Calu3 (cell line): ENCODE measurements at regions of chr3 and their contacts with region 1.

Region 1: GRCh38 chr3:30751610-30752299 is 142.7 kb downstream of the GADL1 start:
- DNase-seq: peak; percentile 27
- H3K4me3 Mint-ChIP-seq: no peak overlapping the region
- H3K27ac Mint-ChIP-seq: no peak overlapping the region
- H3K4me1 Mint-ChIP-seq: peaks cover 38% of the 10 kb centered on the region
- H3K27me3 Mint-ChIP-seq: no peaks in the 10 kb centered on the region
- CTCF ChIP-seq: no peak

Region 2: DNA sequence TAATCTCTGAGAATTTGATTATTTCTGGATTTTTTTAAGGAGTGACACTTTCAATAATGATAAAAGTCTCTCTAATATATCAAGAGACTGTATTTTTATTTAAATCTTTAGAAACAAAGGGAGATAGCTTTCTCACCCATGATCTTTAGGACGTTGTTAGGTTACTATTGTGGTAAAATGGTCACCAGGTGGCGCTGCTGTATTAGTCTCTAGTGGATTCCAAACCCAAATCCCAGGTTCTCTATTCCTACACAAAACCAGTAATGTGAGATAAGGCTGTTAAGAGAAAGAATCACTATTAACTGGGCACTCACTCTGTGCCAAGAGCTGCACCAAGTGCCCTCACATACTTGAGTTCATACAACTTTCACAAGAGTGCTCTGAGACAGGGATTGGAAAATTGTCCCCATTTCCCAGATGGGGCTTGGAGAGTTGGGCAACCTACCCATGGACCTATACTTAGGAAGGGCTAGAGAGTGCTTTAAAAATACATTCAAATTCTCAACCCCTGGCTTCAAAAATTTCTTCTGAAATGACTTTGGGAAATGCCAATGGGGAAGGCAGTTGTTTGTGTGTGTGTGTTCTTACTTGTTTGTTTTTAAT is 738.7 kb before region 1 on chr3:
- CTCF ChIA-PET with region 1: interaction called, 3 read pairs
- intact Hi-C with region 1: loop called (anchors 2 kb)
- DNase-seq: peak; percentile 72
- H3K4me3 Mint-ChIP-seq: no peak overlapping the region
- H3K27ac Mint-ChIP-seq: no peak overlapping the region
- H3K4me1 Mint-ChIP-seq: peaks cover 22% of the 10 kb centered on the region
- H3K27me3 Mint-ChIP-seq: no peaks in the 10 kb centered on the region
- CTCF ChIP-seq: no peak

Region 3: GRCh38 chr3:30042274-30042859 is 709.4 kb before region 1 on chr3:
- CTCF ChIA-PET with region 1: no interaction called
- intact Hi-C with region 1: loop called (anchors 1 kb)
- DNase-seq: peak; percentile 71
- H3K4me3 Mint-ChIP-seq: no peak overlapping the region
- H3K27ac Mint-ChIP-seq: no peak overlapping the region
- H3K4me1 Mint-ChIP-seq: no peaks in the 10 kb centered on the region
- H3K27me3 Mint-ChIP-seq: no peaks in the 10 kb centered on the region
- CTCF ChIP-seq: peak; percentile 23

Region 4: GRCh38 chr3:30199096-30199759 is 552.5 kb before region 1 on chr3:
- CTCF ChIA-PET with region 1: interaction called, 4 read pairs
- intact Hi-C with region 1: loop called (anchors 5 kb)
- DNase-seq: peak; percentile 58
- H3K4me3 Mint-ChIP-seq: no peak overlapping the region
- H3K27ac Mint-ChIP-seq: no peak overlapping the region
- H3K4me1 Mint-ChIP-seq: no peaks in the 10 kb centered on the region
- H3K27me3 Mint-ChIP-seq: no peaks in the 10 kb centered on the region
- CTCF ChIP-seq: peak; percentile 68

Region 5: DNA sequence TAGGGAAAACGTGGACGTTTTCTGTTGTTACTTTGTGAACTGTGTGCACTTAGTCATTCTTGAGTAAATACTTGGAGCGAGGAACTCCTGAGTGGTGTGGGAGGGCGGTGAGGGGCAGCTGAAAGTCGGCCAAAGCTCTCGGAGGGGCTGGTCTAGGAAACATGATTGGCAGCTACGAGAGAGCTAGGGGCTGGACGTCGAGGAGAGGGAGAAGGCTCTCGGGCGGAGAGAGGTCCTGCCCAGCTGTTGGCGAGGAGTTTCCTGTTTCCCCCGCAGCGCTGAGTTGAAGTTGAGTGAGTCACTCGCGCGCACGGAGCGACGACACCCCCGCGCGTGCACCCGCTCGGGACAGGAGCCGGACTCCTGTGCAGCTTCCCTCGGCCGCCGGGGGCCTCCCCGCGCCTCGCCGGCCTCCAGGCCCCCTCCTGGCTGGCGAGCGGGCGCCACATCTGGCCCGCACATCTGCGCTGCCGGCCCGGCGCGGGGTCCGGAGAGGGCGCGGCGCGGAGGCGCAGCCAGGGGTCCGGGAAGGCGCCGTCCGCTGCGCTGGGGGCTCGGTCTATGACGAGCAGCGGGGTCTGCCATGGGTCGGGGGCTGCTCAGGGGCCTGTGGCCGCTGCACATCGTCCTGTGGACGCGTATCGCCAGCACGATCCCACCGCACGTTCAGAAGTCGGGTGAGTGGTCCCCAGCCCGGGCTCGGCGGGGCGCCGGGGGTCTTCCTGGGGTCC is 145.3 kb before region 1 on chr3 and contains the start of gene TGFBR2:
- CTCF ChIA-PET with region 1: no interaction called
- intact Hi-C with region 1: loop called (anchors 5 kb)
- DNase-seq: peak; percentile 95
- H3K4me3 Mint-ChIP-seq: peak within 1 kb of the TSS; percentile 66
- H3K27ac Mint-ChIP-seq: peak within 1 kb of the TSS; percentile 82
- H3K4me1 Mint-ChIP-seq: peaks cover 49% of the 10 kb centered on the region
- H3K27me3 Mint-ChIP-seq: no peaks in the 10 kb centered on the region
- CTCF ChIP-seq: no peak
- total RNA-seq, gene TGFBR2: 103 and 105 TPM in 2 replicates